Cardiac septum (tissue), 1 donor: ENCODE measurements at regions of chr6 and their contacts with region 1.

Region 1: DNA sequence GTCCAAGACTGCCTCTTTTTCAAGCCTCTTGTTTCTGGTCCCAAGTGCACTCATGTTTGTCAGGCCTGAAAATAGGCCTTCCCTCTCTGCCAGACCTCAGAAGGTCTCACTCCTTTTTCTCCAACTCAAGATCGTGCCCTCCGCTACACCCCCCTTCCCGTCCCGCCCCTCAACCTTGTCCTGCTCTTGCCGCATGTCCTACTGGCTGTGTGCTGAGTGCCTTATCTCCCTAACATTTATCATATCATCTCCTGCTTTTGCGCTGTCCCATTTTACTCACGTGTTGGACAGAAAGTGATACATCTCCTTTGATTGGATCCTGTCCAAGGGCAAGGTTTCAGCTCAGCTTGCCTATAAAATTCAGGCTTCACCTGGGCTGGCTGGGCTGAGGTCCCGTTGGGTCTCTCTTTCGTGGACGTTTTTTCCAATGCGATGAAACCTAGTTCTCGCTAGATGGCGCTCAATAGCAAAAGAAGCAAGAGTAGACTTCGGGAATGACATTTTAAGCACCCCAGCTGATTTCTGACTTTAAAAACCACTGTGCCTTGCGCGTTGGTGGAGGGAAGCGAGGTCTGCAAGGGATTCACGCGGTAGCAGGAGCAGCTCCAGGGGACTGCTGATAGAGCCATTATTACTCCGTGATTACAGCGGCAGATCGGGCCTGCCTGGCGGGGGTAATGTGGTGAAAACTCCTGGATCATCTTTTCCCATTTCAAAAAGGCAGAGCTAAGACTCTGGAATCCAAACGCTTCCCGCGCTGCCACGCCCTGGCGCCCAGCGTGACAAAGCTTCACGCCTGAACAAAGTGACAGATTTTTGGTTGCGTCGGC is 137.6 kb downstream of the IMPG1 start:
- DNase-seq: no peak

Region 2: GRCh38 chr6:76351275-76351674 is 416.4 kb after region 1 on chr6:
- intact Hi-C with region 1: loop called (anchors 10 kb)
- DNase-seq: no peak

Region 3: DNA sequence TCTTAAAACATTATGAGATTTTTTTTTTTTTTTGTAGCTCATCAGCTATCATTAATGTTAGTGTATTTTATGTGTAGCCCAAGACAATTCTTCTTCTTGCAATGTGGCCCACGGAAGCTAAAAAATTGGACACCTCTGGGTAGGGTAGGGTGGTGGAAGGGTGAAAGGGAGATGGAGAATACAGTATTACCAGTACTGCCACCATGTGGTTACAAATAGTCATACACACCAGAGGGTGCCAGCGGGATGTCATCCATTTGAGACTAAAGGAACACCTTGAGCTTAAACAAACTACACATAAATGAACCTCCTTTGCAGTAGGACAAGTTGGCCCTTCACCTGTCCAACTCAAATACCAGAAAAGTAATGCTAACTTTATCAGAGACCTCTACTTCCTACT is 926.5 kb after region 1 on chr6:
- intact Hi-C with region 1: loop called (anchors 10 kb)
- DNase-seq: no peak

Region 4: GRCh38 chr6:77457720-77458349 is 1523.0 kb after region 1 on chr6:
- intact Hi-C with region 1: loop called (anchors 5 kb)
- DNase-seq: no peak